CD4-positive, alpha-beta memory T cell (primary cell): ENCODE measurements at regions of chr6 and their contacts with region 1.

Region 1: DNA sequence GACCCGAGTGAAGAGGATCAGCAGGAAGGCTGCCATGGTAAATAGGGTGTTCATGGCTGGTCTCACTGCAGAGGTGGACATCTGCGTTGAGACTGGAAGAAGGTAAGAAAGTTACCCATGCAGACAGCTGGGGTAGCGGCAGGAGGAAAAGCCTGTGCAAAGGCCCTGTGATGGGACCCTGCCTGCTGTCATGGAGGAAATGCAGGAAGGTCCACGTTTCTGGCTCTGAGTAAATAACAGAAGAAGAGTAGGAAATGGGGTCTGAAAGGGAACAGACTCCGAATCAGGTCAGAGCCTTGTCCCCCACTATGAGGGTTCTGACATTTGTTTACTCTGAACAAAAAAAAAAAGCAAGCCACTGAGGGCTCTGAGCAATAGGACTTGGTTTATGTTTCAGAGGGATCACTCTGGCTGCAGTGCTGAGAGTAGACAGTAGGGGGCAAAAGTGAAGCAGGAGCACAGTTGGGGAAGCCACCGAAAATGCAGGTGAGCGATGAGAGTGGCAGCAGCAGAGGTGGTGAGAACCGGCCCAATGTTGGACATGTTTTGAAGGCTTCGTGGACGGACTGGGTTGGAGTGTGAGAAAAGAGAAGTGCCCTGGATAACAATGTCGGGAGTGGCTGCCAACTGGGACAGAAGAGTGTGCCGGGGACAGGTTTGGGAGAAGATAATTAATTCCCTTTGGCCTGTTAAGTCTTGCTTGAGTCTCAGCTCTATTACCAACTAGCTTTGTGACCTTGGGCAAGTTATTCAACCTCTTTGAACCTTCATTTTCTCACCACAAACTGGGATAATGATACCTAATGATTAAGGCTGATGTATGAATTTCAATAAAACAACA is 57.9 kb upstream of the MAP7 start:
- DNase-seq: peak; percentile 70 to 76 (median 75)
- H3K4me3 ChIP-seq: no peak overlapping the region
- H3K4me3 Mint-ChIP-seq: no peak overlapping the region
- H3K27ac ChIP-seq: no peak overlapping the region
- H3K27ac Mint-ChIP-seq: peak overlapping the region in 5 of 7 donors; percentile 3 to 55 (median 11)
- H3K4me1 ChIP-seq: no peaks in the 10 kb centered on the region
- H3K4me1 Mint-ChIP-seq: peaks cover 8 to 24% (median 12%) of the 10 kb centered on the region in 4 donors
- H3K27me3 ChIP-seq: no peaks in the 10 kb centered on the region
- H3K27me3 Mint-ChIP-seq: no peaks in the 10 kb centered on the region

Region 2: DNA sequence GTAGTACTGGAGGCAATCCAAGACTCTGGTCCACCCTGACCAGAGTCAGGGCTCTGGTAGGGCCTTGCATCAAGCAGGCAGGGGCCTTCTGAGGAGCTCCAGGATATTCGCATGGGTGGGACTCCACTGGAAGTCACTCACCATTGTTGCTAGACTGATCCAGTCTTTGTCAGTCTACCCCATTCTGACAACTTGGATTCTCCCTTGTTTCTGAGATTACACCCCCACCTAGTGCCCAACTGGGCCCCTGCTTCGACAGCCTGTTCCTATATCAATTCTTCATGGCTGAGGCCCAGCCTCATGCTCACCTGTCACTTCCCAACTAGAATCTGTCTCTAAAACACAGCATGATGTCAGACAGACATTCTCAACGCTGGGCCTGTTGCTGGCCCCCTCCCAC is 319.1 kb after region 1 on chr6:
- CTCF ChIA-PET with region 1: no interaction called
- POLR2A ChIA-PET with region 1: no interaction called
- intact Hi-C with region 1: loop called (anchors 10 kb)
- DNase-seq: peak in 3 of 5 donors; percentile 4 to 10 (median 7)
- H3K4me3 ChIP-seq: no peak overlapping the region
- H3K4me3 Mint-ChIP-seq: no peak overlapping the region
- H3K27ac ChIP-seq: no peak overlapping the region
- H3K27ac Mint-ChIP-seq: no peak overlapping the region
- H3K4me1 ChIP-seq: peaks cover 12% of the 10 kb centered on the region
- H3K4me1 Mint-ChIP-seq: peaks cover 3 to 15% (median 12%) of the 10 kb centered on the region in 4 donors
- H3K27me3 ChIP-seq: peaks cover 13% of the 10 kb centered on the region
- H3K27me3 Mint-ChIP-seq: peaks cover 28 to 35% of the 10 kb centered on the region in 2 donors